Dendritic cell treated with granulocyte-macrophage colony-stimulating factor and Interleukin-4, amounts not matched to agents 40 ng/mL and 50 ng/mL, for 4 days (primary cell): ENCODE measurements at regions of chr14 and their contacts with region 1.

Region 1: DNA sequence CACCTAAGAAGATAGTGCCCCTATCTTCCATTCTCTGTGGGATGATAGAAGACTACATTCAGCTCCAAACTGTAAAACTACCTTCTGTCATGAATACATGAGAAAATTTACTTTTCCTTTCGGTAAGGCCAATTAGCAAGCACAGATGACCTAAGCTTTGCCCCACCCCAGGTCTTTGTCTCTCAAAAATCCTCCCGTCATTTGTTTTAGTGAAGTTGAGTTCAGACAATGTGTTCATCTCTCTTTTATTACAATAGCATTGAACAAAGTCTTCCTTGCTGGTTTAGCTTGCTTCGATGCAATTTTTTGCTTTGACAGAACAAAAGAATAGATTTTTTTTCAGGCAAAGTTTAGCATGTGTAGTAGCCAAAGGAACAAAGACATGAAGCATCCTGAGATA is 18.2 kb upstream of the FSCB start:
- H3K4me3 Mint-ChIP-seq: no peak overlapping the region
- H3K27ac Mint-ChIP-seq: no peak overlapping the region
- H3K4me1 Mint-ChIP-seq: no peaks in the 10 kb centered on the region
- H3K27me3 Mint-ChIP-seq: no peaks in the 10 kb centered on the region

Region 2: DNA sequence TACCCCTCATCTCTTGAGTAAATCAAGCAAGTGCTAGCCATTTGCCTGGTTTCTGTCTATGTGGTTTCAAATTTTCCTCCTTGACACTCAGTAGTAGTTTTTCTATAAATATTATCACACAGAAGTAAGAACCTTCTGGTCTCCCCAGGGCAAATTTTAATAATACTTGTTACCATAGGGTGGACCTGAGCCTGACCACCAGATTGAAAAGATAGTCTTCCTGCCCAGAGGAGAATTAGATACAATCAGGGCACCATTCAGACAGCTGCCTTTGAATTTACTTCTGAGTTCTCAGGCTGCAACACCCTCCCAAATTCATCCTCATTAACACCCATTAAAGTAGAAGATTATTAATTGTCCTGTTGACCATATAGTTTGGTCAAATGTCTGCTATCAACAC is 69.7 kb after region 1 on chr14:
- intact Hi-C with region 1: loop called (anchors 2 kb)
- H3K4me3 Mint-ChIP-seq: no peak overlapping the region
- H3K27ac Mint-ChIP-seq: no peak overlapping the region
- H3K4me1 Mint-ChIP-seq: no peaks in the 10 kb centered on the region
- H3K27me3 Mint-ChIP-seq: no peaks in the 10 kb centered on the region